Panc1 (cell line): ENCODE measurements at regions of chr17 and their contacts with region 1.

Region 1: DNA sequence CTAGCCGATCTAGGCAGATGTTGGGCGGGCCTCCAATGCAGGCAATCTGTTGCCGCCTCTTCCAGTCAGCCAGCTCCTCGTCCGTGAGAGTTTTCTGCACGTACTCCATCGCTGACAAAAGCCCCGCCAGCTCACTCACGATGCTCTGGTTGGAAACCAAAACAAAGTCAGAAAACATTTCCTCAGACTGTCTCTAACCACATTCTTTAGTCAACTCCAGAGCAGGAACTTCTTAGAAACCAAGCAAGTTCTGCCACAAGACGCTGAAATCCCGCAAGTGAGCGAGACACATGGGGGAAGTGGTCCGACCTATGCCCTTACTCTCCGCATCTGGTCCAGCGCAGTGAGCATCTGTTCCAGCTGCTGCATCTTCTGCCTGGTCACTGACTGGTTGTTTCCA is 49.1 kb downstream of the STAT5A start:
- DNase-seq: no peak
- ATAC-seq: no peak
- H3K4me3 ChIP-seq: no peak overlapping the region
- H3K27ac ChIP-seq: peak overlapping the region; percentile 54; the same call in 1 of the 2 replicates
- H3K4me1 ChIP-seq: peaks cover 3% of the 10 kb centered on the region; the same call in 1 of the 2 replicates
- H3K27me3 ChIP-seq: no peaks in the 10 kb centered on the region
- CTCF ChIP-seq: no peak

Region 2: GRCh38 chr17:42171831-42172230 is 165.6 kb before region 1 on chr17:
- CTCF ChIA-PET with region 1: interaction called, 17 read pairs
- POLR2A ChIA-PET with region 1: no interaction called
- in situ Hi-C with region 1: no loop called
- intact Hi-C with region 1: no loop called
- DNase-seq: no peak
- ATAC-seq: no peak
- H3K4me3 ChIP-seq: no peak overlapping the region
- H3K27ac ChIP-seq: no peak overlapping the region
- H3K4me1 ChIP-seq: no peaks in the 10 kb centered on the region
- H3K27me3 ChIP-seq: no peaks in the 10 kb centered on the region
- CTCF ChIP-seq: no peak

Region 3: GRCh38 chr17:42227849-42228615 is 109.4 kb before region 1 on chr17:
- CTCF ChIA-PET with region 1: interaction called, 10 read pairs
- POLR2A ChIA-PET with region 1: no interaction called
- in situ Hi-C with region 1: no loop called
- intact Hi-C with region 1: no loop called
- DNase-seq: no peak
- ATAC-seq: peak; percentile 50
- H3K4me3 ChIP-seq: no peak overlapping the region
- H3K27ac ChIP-seq: peak overlapping the region; percentile 85
- H3K4me1 ChIP-seq: peaks cover 27% of the 10 kb centered on the region
- H3K27me3 ChIP-seq: no peaks in the 10 kb centered on the region
- CTCF ChIP-seq: no peak

Region 4: GRCh38 chr17:42399948-42400843 is 62.8 kb after region 1 on chr17:
- CTCF ChIA-PET with region 1: no interaction called
- POLR2A ChIA-PET with region 1: no interaction called
- in situ Hi-C with region 1: no loop called
- intact Hi-C with region 1: no loop called
- DNase-seq: no peak
- ATAC-seq: peak; percentile 35
- H3K4me3 ChIP-seq: no peak overlapping the region
- H3K27ac ChIP-seq: peak overlapping the region; percentile 84
- H3K4me1 ChIP-seq: peaks cover 45% of the 10 kb centered on the region
- H3K27me3 ChIP-seq: no peaks in the 10 kb centered on the region
- CTCF ChIP-seq: no peak

Region 5: GRCh38 chr17:42411905-42412679 is 74.7 kb after region 1 on chr17:
- CTCF ChIA-PET with region 1: no interaction called
- POLR2A ChIA-PET with region 1: interaction called, 12 read pairs
- in situ Hi-C with region 1: no loop called
- intact Hi-C with region 1: no loop called
- DNase-seq: no peak
- ATAC-seq: no peak
- H3K4me3 ChIP-seq: no peak overlapping the region
- H3K27ac ChIP-seq: 0 out of 2 replicates have a peak overlapping the region, but pooled peaks have one; percentile 12
- H3K4me1 ChIP-seq: peaks cover 46% of the 10 kb centered on the region
- H3K27me3 ChIP-seq: no peaks in the 10 kb centered on the region
- CTCF ChIP-seq: no peak